Activated CD8-positive, alpha-beta T cell treated with anti-CD3 and anti-CD28 coated beads for 36 hours (primary cell): ENCODE measurements at regions of chr22 and their contacts with region 1.

Region 1: DNA sequence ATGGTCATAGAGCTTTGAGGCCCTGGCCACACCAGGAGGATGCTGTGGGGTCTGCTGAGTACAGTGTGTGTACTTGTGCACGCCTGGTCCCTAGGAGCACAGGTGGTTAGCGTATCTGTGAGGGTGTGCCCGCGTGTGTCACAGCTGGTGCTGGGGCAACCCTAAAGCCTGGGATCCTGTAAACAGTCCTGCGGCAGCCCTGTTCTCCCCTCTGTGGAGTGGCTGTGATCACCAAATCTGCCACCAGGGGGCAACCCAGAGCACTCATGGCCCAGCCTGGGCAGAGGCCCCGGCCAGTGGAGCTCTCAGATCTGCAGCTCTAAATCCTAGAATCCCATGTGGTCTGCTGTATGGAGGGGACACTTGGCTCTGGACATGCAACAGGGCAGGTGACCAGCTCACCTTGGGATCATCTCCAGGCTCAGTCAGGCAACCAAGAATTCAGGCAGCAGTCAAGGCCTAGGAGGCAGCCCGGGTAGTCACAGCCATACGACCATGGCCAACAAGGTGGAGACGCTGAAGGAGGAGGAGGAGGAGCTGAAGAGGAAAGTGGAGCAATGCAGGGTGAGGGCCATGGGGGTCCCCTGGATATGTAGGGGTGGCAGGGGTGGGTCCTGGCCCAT is 3.9 kb downstream of the SH3BP1 start:
- DNase-seq: peak; percentile 94
- ATAC-seq: peak; percentile 75
- H3K4me3 Mint-ChIP-seq: no peak overlapping the region
- H3K27ac Mint-ChIP-seq: peak overlapping the region; percentile 79
- H3K4me1 Mint-ChIP-seq: peaks cover 33% of the 10 kb centered on the region
- H3K27me3 Mint-ChIP-seq: no peaks in the 10 kb centered on the region
- CTCF ChIP-seq: peak; percentile 86

Region 2: GRCh38 chr22:37623075-37624016 is 20.0 kb before region 1 on chr22:
- CTCF ChIA-PET with region 1: interaction called, 1,770 read pairs
- POLR2A ChIA-PET with region 1: interaction called, 28 read pairs
- intact Hi-C with region 1: no loop called
- DNase-seq: peak; percentile 90
- ATAC-seq: peak; percentile 84
- H3K4me3 Mint-ChIP-seq: no peak overlapping the region
- H3K27ac Mint-ChIP-seq: peak overlapping the region; percentile 90
- H3K4me1 Mint-ChIP-seq: peaks cover 48% of the 10 kb centered on the region
- H3K27me3 Mint-ChIP-seq: no peaks in the 10 kb centered on the region
- CTCF ChIP-seq: peak; percentile 81

Region 3: GRCh38 chr22:37658133-37659065 is 15.1 kb after region 1 on chr22 and contains the start of gene PDXP:
- CTCF ChIA-PET with region 1: interaction called, 1,770 read pairs
- POLR2A ChIA-PET with region 1: interaction called, 51 read pairs
- intact Hi-C with region 1: no loop called
- DNase-seq: peak; percentile 98
- ATAC-seq: peak; percentile 97
- H3K4me3 Mint-ChIP-seq: peak within 1 kb of the TSS; percentile 89
- H3K27ac Mint-ChIP-seq: peak within 1 kb of the TSS; percentile 95
- H3K4me1 Mint-ChIP-seq: peaks cover 39% of the 10 kb centered on the region
- H3K27me3 Mint-ChIP-seq: no peaks in the 10 kb centered on the region
- CTCF ChIP-seq: no peak
- total RNA-seq, gene PDXP: 51.3 to 51.5 TPM

Region 4: DNA sequence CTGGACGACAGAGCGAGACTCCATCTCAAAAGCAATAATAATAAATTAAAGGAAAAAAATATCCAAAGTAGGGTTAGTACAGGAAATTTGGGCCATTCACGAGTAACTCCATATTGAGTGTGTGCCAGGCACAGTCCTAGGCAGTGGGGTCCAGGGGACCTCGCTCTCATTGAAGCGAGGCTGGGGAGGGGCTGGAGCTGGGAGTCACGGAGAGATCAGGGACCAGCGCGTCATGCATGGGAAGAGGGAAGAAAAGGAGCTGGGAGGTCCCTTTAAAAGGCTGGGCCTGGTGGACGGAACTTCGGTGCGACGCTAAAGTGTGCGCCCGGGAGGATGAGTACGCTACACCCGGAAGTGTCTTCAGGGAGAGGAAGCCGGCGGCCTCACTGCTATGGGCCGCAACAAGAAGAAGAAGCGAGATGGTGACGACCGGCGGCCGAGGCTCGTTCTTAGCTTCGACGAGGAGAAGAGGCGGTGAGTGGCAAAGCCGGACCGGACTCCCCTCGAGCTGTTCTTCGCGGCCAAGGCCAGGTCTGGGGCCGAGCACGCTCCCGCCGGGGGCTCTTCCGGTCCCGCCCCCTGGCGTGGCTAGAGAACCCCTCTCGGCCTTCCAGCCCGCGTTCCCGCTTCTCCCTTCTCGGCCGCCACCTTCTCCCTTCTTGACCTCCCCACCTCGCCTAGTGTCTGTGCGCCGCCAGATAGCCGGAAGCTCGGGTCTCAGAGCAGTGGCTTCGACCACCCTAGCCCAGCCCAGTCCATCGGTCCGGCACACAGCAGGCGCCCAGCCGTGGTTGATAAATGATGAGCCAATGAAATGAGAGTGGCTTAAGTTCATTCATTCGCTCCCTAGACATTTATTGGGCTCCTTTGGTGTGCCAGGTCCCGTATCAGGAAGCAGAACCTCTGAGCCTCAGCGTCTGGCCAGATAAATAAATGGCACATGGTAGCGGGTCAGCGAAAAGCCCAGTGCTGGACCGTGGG is 43.0 kb after region 1 on chr22 and contains the start of gene NOL12:
- CTCF ChIA-PET with region 1: interaction called, 1,770 read pairs
- POLR2A ChIA-PET with region 1: interaction called, 12 read pairs
- intact Hi-C with region 1: no loop called
- DNase-seq: peak; percentile 79
- ATAC-seq: peak; percentile 88
- H3K4me3 Mint-ChIP-seq: peak within 1 kb of the TSS; percentile 99
- H3K27ac Mint-ChIP-seq: peak within 1 kb of the TSS; percentile 96
- H3K4me1 Mint-ChIP-seq: peaks cover 26% of the 10 kb centered on the region
- H3K27me3 Mint-ChIP-seq: no peaks in the 10 kb centered on the region
- CTCF ChIP-seq: no peak
- total RNA-seq, gene NOL12: 36.8 to 38.8 TPM

Region 5: GRCh38 chr22:37696657-37697537 is 53.6 kb after region 1 on chr22 and contains the start of gene TRIOBP:
- CTCF ChIA-PET with region 1: interaction called, 20 read pairs
- POLR2A ChIA-PET with region 1: interaction called, 3 read pairs
- intact Hi-C with region 1: no loop called
- DNase-seq: peak; percentile 98
- ATAC-seq: peak; percentile 99
- H3K4me3 Mint-ChIP-seq: peak within 1 kb of the TSS; percentile 65
- H3K27ac Mint-ChIP-seq: peak within 1 kb of the TSS; percentile 24
- H3K4me1 Mint-ChIP-seq: peaks cover 14% of the 10 kb centered on the region
- H3K27me3 Mint-ChIP-seq: no peaks in the 10 kb centered on the region
- CTCF ChIP-seq: peak; percentile 46
- total RNA-seq, gene TRIOBP: 17.8 to 20.7 TPM